ENCODE measurements at regions of chr7 and their contacts with region 1.

Region 1: DNA sequence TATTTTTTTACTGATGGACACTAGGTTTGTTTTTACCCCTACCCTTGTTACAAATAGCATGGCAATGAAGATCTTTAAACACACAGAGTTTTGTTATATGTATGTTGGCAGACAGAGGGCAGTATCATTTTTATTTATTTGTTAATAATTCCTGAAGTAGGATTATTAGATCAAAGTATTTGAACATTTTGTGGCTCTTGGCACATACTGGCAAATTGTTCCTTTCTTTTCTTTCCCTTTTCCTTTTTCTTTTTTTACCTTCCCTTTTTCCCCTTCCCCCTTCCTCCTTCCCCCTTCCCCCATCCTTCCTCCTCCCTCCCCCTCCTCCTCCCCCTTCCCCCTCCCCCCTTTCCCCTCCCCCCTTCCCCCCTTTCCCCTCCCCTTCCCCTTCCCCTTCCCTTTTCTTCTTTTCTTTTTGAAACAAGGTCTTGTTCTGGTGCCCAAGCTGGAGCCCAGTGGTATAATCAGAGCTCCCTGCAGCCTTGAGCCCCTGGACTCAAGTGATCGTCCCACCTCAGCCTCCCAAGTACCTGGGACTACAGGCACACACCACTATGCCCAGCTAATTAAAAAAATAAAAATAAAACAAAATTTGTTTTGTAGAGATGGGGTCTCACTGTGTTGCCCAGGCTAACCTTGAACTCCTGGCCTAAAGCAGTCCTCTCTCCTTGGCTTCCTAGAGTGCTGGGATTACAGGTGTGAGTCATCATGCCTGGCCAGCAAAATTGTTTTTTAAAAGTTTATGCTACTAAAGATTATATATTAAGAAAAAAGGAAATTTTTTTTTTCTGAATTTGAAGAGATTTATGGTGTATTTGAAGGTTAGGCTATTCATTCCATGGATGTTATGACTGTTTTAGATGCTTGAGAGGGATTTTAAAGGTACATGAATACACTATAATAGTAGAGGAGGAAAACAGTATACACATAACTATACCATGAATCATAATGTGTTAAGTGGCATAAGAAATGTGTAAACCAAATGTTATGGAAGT is 39.3 kb downstream of the SEPTIN7 start:
- DNase-seq: no peak
- ATAC-seq: no peak
- H3K4me3 ChIP-seq: no peak overlapping the region
- H3K27ac ChIP-seq: no peak overlapping the region
- H3K4me1 ChIP-seq: peaks cover 6% of the 10 kb centered on the region
- H3K27me3 ChIP-seq: no peaks in the 10 kb centered on the region
- CTCF ChIP-seq: no peak

Region 2: GRCh38 chr7:35630024-35630972 is 209.9 kb before region 1 on chr7:
- intact Hi-C with region 1: no loop called
- DNase-seq: no peak
- ATAC-seq: no peak
- H3K4me3 ChIP-seq: no peak overlapping the region
- H3K27ac ChIP-seq: no peak overlapping the region
- H3K4me1 ChIP-seq: no peaks in the 10 kb centered on the region
- H3K27me3 ChIP-seq: no peaks in the 10 kb centered on the region
- CTCF ChIP-seq: no peak

Region 3: GRCh38 chr7:35828817-35829216 is 11.3 kb before region 1 on chr7:
- intact Hi-C with region 1: loop called in 1 of 2 experiments (anchors 1 kb)
- DNase-seq: no peak
- ATAC-seq: peak; percentile 57 to 73 (median 62)
- H3K4me3 ChIP-seq: no peak overlapping the region
- H3K27ac ChIP-seq: peak overlapping the region; percentile 33
- H3K4me1 ChIP-seq: peaks cover 69% of the 10 kb centered on the region
- H3K27me3 ChIP-seq: no peaks in the 10 kb centered on the region
- CTCF ChIP-seq: no peak